K562 (cell line): ENCODE measurements at regions of chr1 and their contacts with region 1.

Region 1: GRCh38 chr1:222387007-222387814 is 160.7 kb downstream of the HHIPL2 start:
- DNase-seq: peak; percentile 47 to 65 (median 54)
- ATAC-seq: peak; percentile 99
- H3K4me3 ChIP-seq: no peak overlapping the region
- H3K27ac ChIP-seq: no peak overlapping the region
- H3K4me1 ChIP-seq: no peaks in the 10 kb centered on the region
- H3K27me3 ChIP-seq: no peaks in the 10 kb centered on the region
- CTCF ChIP-seq: peak; percentile 57 to 82 (median 73); a peak in 5 of 6 replicates
- EP300 ChIP-seq: no peak
- POLR2A ChIP-seq: no peak
- RAD21 ChIP-seq: peak; percentile 72

Region 2: DNA sequence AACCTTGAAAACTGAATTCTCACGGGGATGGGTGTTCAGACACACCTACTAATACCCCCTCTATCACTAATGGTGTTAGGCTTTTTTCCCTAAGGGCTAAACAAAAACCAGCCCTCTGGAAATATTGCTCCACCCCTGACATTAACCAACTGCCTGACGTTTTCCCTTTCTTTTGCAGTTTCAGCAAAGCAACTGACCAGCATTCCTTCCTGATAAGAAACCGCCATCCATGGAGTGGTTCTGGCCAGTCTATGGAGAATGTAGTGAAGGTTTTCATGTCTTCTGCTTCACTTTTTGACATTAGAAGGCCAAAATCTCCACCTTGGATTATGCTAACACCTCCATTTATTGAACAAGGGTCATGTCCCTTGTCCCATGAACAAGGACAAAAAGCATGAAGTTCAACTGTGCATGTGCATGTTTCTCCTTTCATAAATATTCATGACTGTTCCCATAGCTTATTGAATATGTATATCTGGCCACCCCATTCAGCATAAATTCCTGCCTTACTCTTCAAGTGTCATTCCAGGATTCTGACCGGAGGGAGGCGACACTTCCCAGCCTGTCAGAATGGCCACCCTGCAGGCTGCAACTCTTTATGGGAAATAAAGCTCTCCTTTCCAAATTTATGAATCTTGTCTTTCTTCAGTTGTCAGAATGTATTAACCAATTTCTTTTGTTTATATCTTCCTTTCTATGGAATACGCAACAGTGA is 153.6 kb before region 1 on chr1:
- CTCF ChIA-PET with region 1: interaction called, 4 read pairs
- POLR2A ChIA-PET with region 1: no interaction called
- in situ Hi-C with region 1: no loop called
- intact Hi-C with region 1: loop called (anchors 5 kb)
- DNase-seq: peak in 1 of 4 experiments; percentile 25
- ATAC-seq: peak; percentile 78
- H3K4me3 ChIP-seq: no peak overlapping the region
- H3K27ac ChIP-seq: no peak overlapping the region
- H3K4me1 ChIP-seq: no peaks in the 10 kb centered on the region
- H3K27me3 ChIP-seq: no peaks in the 10 kb centered on the region
- CTCF ChIP-seq: peak; percentile 35 to 53 (median 46); a peak in 4 of 6 replicates
- EP300 ChIP-seq: no peak
- POLR2A ChIP-seq: no peak
- RAD21 ChIP-seq: peak; percentile 79 to 84